GM12878 (cell line): ENCODE measurements at regions of chr7 and their contacts with region 1.

Region 1: DNA sequence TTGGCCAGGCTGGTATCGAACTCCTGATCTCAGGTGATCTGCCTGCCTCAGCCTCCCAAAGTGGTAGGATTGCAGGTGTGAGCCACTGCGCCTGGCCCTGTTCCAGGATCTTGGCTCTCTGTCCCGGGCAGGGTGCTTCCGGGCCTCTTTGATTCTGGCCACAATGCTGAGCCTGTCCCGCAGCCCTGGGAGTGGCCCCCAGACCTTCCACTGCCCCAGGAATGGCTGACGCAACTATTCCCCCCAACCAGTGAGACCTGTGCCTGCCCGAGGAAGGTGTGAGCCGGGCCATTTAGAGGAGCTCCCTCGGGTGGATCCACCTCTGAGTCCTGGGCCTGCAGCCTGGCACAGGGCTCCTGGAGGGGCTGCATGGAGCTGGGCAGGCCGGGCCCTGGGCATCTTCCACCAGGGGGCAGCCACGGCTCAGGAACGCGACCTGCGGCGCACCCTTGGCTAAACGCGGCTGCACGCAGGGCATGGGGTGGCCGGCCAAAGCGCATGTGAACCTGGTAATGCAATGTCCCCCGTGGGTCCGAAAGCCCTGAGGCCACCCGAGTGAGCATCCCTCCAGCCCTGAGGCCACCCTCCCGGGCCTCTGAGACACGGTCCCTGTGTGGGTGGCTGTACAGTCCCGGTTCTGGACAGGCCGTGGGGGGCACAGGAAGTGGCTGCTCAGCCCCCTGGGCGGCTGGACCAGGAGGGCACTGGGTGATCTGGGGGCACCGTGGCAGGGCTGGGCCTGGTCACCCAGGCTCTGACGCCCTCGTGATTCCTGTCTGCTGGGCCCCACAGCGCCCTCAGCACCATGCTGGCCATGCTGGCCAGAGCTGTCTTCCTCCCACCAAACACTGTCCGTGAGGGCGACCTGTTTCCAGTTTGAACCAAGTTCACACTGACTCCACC is 24.8 kb downstream of the GRIFIN start:
- DNase-seq: no peak
- ATAC-seq: peak; percentile 99
- H3K4me3 ChIP-seq: no peak overlapping the region; the same call in 1 of the 2 replicates
- H3K27ac ChIP-seq: no peak overlapping the region
- H3K4me1 ChIP-seq: peaks cover 7% of the 10 kb centered on the region
- H3K27me3 ChIP-seq: no peaks in the 10 kb centered on the region
- CTCF ChIP-seq: peak; percentile 85 to 97 (median 95)
- EP300 ChIP-seq: no peak
- POLR2A ChIP-seq: no peak
- RAD21 ChIP-seq: peak; percentile 86

Region 2: GRCh38 chr7:2465928-2466327 is 14.5 kb after region 1 on chr7:
- CTCF ChIA-PET with region 1: interaction called, 114 read pairs
- POLR2A ChIA-PET with region 1: interaction called, 8 read pairs
- RAD21 ChIA-PET with region 1: interaction called, 42 read pairs
- SMC1A ChIA-PET with region 1: interaction called, 21 read pairs
- in situ Hi-C with region 1: no loop called
- intact Hi-C with region 1: loop called (anchors 2 kb)
- DNase-seq: no peak
- ATAC-seq: no peak
- H3K4me3 ChIP-seq: no peak overlapping the region
- H3K27ac ChIP-seq: no peak overlapping the region
- H3K4me1 ChIP-seq: no peaks in the 10 kb centered on the region
- H3K27me3 ChIP-seq: no peaks in the 10 kb centered on the region
- CTCF ChIP-seq: no peak
- EP300 ChIP-seq: no peak
- POLR2A ChIP-seq: no peak
- RAD21 ChIP-seq: no peak

Region 3: DNA sequence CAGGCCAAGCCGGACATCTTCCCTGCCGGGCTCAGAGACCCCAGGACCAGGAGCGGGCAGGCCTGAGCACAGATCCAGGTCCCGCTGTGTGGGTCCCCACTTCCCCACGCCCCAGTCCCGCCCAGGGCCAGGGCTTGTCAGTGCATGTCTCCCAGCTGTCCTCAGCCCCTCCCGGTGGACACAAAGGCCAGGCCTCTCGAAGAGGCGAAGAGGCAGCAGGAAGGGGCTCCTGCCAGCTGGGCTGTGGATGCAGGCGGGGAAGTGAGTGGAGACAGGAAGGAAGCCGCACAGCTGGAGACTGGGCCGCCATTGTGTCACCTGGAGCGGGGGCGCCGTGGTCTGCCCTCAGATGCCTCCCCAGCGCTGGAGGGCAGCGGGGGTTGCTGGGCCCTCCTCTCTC is 20.0 kb after region 1 on chr7:
- CTCF ChIA-PET with region 1: interaction called, 114 read pairs
- POLR2A ChIA-PET with region 1: interaction called, 8 read pairs
- RAD21 ChIA-PET with region 1: interaction called, 42 read pairs
- SMC1A ChIA-PET with region 1: interaction called, 21 read pairs
- in situ Hi-C with region 1: no loop called
- intact Hi-C with region 1: loop called (anchors 2 kb)
- DNase-seq: no peak
- ATAC-seq: no peak; the same call in 2 of the 3 replicates
- H3K4me3 ChIP-seq: no peak overlapping the region
- H3K27ac ChIP-seq: no peak overlapping the region
- H3K4me1 ChIP-seq: no peaks in the 10 kb centered on the region
- H3K27me3 ChIP-seq: no peaks in the 10 kb centered on the region
- CTCF ChIP-seq: no peak
- EP300 ChIP-seq: no peak
- POLR2A ChIP-seq: no peak
- RAD21 ChIP-seq: no peak

Region 4: GRCh38 chr7:2567679-2568278 is 116.4 kb after region 1 on chr7:
- CTCF ChIA-PET with region 1: interaction called, 16 read pairs
- POLR2A ChIA-PET with region 1: no interaction called
- RAD21 ChIA-PET with region 1: interaction called, 7 read pairs
- SMC1A ChIA-PET with region 1: interaction called, 3 read pairs
- in situ Hi-C with region 1: no loop called
- intact Hi-C with region 1: no loop called
- DNase-seq: no peak
- ATAC-seq: peak; percentile 69
- H3K4me3 ChIP-seq: 0 out of 2 replicates have a peak overlapping the region, but pooled peaks have one; percentile 54
- H3K27ac ChIP-seq: no peak overlapping the region
- H3K4me1 ChIP-seq: peaks cover 23% of the 10 kb centered on the region
- H3K27me3 ChIP-seq: no peaks in the 10 kb centered on the region
- CTCF ChIP-seq: peak; percentile 43 to 59 (median 55)
- EP300 ChIP-seq: no peak
- POLR2A ChIP-seq: no peak
- RAD21 ChIP-seq: peak; percentile 56

Region 5: GRCh38 chr7:2680792-2681490 is 229.5 kb after region 1 on chr7:
- CTCF ChIA-PET with region 1: interaction called, 13 read pairs
- POLR2A ChIA-PET with region 1: no interaction called
- RAD21 ChIA-PET with region 1: interaction called, 11 read pairs
- SMC1A ChIA-PET with region 1: no interaction called
- in situ Hi-C with region 1: no loop called
- intact Hi-C with region 1: loop called (anchors 1 kb)
- DNase-seq: no peak
- ATAC-seq: peak; percentile 91
- H3K4me3 ChIP-seq: no peak overlapping the region
- H3K27ac ChIP-seq: no peak overlapping the region
- H3K4me1 ChIP-seq: no peaks in the 10 kb centered on the region
- H3K27me3 ChIP-seq: no peaks in the 10 kb centered on the region; a peak in 1 of 4 replicates
- CTCF ChIP-seq: peak; percentile 64 to 72 (median 72)
- EP300 ChIP-seq: no peak
- POLR2A ChIP-seq: no peak
- RAD21 ChIP-seq: peak; percentile 70